ENCODE measurements at regions of chr6 and their contacts with region 1.

Region 1: GRCh38 chr6:112043032-112044007 is 10.6 kb upstream of the CCN6 start:
- DNase-seq: peak; percentile 91
- ATAC-seq: peak; percentile 96
- H3K4me3 ChIP-seq: peak overlapping the region; percentile 53
- H3K27ac ChIP-seq: peak overlapping the region; percentile 13
- H3K4me1 ChIP-seq: peaks cover 11% of the 10 kb centered on the region
- H3K27me3 ChIP-seq: no peaks in the 10 kb centered on the region
- CTCF ChIP-seq: peak; percentile 98
- POLR2A ChIP-seq: peak; percentile 68; the same call in 1 of the 2 replicates
- RAD21 ChIP-seq: peak; percentile 96

Region 2: GRCh38 chr6:111011360-111012142 is 1031.8 kb before region 1 on chr6:
- CTCF ChIA-PET with region 1: no interaction called
- POLR2A ChIA-PET with region 1: no interaction called
- dilution Hi-C with region 1: no loop called
- in situ Hi-C with region 1: no loop called
- intact Hi-C with region 1: loop called (anchors 5 kb)
- DNase-seq: peak; percentile 55
- ATAC-seq: peak; percentile 80
- H3K4me3 ChIP-seq: no peak overlapping the region
- H3K27ac ChIP-seq: no peak overlapping the region
- H3K4me1 ChIP-seq: no peaks in the 10 kb centered on the region; the same call in 1 of the 2 replicates
- H3K27me3 ChIP-seq: no peaks in the 10 kb centered on the region
- CTCF ChIP-seq: peak; percentile 70
- POLR2A ChIP-seq: no peak
- RAD21 ChIP-seq: peak; percentile 73

Region 3: GRCh38 chr6:111259089-111259831 is 784.1 kb before region 1 on chr6:
- CTCF ChIA-PET with region 1: no interaction called
- POLR2A ChIA-PET with region 1: no interaction called
- dilution Hi-C with region 1: no loop called
- in situ Hi-C with region 1: no loop called
- intact Hi-C with region 1: loop called (anchors 1 kb)
- DNase-seq: peak; percentile 99
- ATAC-seq: peak; percentile 98
- H3K4me3 ChIP-seq: peak overlapping the region; percentile 62
- H3K27ac ChIP-seq: peak overlapping the region; percentile 56
- H3K4me1 ChIP-seq: peaks cover 10% of the 10 kb centered on the region
- H3K27me3 ChIP-seq: no peaks in the 10 kb centered on the region
- CTCF ChIP-seq: peak; percentile 98
- POLR2A ChIP-seq: peak; percentile 85
- RAD21 ChIP-seq: peak; percentile 85

Region 4: DNA sequence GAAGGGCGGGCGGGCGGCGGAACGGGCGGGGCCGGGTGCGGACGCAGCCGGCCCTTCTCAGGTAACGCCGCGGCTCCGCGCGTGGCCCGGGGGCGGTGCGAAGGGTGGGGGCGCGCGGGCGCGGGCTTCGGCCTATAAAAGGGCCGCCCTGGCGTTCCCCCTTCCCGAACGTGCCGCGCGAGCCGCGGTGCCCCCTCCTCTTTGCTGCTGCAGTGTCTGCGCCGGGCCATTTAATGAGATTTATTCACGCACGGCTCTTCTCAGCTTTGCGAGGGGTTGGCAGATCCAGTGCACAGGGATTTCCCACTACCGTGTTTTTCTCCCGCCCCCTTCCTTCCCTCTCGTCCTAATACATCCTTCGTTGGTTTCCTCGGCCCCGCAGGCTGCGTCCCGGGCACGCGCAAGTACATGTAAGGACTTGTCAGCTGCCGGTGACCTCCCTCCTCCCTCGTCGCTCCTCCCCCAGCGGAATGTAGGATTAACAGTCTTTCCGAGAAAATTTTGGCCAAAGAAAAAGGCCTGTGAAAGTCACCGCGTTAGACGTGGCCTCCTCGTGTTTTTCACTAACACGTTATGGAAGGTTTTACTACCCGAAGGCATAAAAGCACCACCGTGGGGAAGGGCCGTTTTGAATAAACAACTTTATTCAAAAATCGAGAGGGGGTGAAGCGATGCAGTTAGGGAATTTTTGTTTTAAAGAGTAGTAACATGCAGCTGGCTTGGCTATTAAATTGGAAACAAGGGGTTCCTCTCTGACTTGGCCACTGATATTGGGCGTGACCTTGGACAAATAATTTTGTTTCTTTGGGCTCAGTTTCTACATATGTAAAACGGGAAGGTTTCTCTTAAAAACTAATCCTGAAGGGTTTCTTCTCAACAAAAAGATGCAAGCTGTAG is 559.3 kb before region 1 on chr6:
- CTCF ChIA-PET with region 1: no interaction called
- POLR2A ChIA-PET with region 1: no interaction called
- dilution Hi-C with region 1: no loop called
- in situ Hi-C with region 1: no loop called
- intact Hi-C with region 1: loop called (anchors 5 kb)
- DNase-seq: peak; percentile 97
- ATAC-seq: peak; percentile 74
- H3K4me3 ChIP-seq: peak overlapping the region; percentile 88
- H3K27ac ChIP-seq: peak overlapping the region; percentile 96
- H3K4me1 ChIP-seq: peaks cover 5% of the 10 kb centered on the region
- H3K27me3 ChIP-seq: no peaks in the 10 kb centered on the region
- CTCF ChIP-seq: 0 out of 2 replicates have a peak, but pooled peaks have one; percentile 3
- POLR2A ChIP-seq: peak; percentile 97
- RAD21 ChIP-seq: no peak; the same call in 1 of the 2 replicates

Region 5: GRCh38 chr6:111709615-111710398 is 333.5 kb before region 1 on chr6:
- CTCF ChIA-PET with region 1: interaction called, 4 read pairs
- POLR2A ChIA-PET with region 1: no interaction called
- dilution Hi-C with region 1: no loop called
- in situ Hi-C with region 1: no loop called
- intact Hi-C with region 1: loop called (anchors 1 kb)
- DNase-seq: peak; percentile 76
- ATAC-seq: peak; percentile 90
- H3K4me3 ChIP-seq: no peak overlapping the region
- H3K27ac ChIP-seq: 0 out of 2 replicates have a peak overlapping the region, but pooled peaks have one; percentile 48
- H3K4me1 ChIP-seq: peaks cover 6% of the 10 kb centered on the region
- H3K27me3 ChIP-seq: no peaks in the 10 kb centered on the region
- CTCF ChIP-seq: peak; percentile 82
- POLR2A ChIP-seq: no peak
- RAD21 ChIP-seq: peak; percentile 87

Region 6: DNA sequence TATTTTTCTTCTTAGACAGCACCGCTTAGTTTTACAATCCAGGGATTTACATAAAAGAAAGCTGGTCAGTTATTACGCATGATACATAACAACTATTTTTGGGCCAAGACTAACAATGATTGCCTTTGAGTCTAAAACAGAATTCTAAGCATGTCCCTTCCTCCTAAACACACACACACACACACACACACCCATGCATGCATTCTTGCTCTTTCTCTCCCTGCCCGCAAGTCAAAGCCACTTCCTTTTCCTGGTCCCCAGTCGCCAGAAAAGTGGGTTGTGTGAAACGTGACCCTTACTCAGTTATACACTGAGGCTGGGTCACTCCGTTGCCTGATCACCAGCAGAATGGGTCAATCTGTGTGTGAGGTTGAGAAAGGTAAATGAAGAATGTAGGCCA is 201.5 kb before region 1 on chr6:
- CTCF ChIA-PET with region 1: no interaction called
- POLR2A ChIA-PET with region 1: no interaction called
- dilution Hi-C with region 1: no loop called
- in situ Hi-C with region 1: no loop called
- intact Hi-C with region 1: no loop called
- DNase-seq: peak; percentile 76
- ATAC-seq: peak; percentile 22; the same call in 1 of the 2 replicates
- H3K4me3 ChIP-seq: no peak overlapping the region
- H3K27ac ChIP-seq: peak overlapping the region; percentile 63
- H3K4me1 ChIP-seq: peaks cover 17% of the 10 kb centered on the region
- H3K27me3 ChIP-seq: no peaks in the 10 kb centered on the region
- CTCF ChIP-seq: no peak
- POLR2A ChIP-seq: no peak
- RAD21 ChIP-seq: no peak

Region 7: DNA sequence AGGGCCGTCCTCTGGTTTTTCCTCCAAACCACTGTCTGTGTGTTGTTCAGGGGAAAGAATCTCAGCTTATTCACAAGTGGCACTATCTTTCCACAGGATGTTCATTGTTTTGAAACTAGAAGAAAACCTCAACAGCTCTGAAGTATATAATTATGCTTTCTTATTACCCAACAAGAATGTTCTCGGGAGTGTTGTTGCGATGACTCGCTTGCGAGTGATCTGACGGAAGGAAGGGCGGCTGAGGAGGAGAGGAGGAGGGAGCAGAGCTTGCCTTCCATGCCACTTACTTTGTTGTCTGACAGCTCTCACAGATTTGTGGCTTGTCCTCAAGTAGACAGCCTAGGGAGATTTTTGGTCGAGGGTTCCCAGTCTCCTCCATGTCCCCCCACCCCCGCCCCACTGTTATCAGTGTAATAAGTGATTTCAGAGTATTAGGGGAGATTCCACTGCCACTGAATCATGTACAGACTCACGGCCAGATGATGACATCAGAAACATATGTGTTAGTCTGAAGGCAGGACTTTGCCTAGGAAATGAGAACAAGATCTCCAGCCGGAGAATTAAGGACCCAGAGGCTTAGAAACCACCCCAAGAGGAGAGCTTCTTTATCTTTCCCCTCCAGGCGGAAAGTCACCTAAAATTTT is 70.1 kb before region 1 on chr6:
- CTCF ChIA-PET with region 1: no interaction called
- POLR2A ChIA-PET with region 1: no interaction called
- dilution Hi-C with region 1: no loop called
- in situ Hi-C with region 1: no loop called
- intact Hi-C with region 1: loop called (anchors 2 kb)
- DNase-seq: peak; percentile 98
- ATAC-seq: peak; percentile 93
- H3K4me3 ChIP-seq: peak overlapping the region; percentile 13
- H3K27ac ChIP-seq: peak overlapping the region; percentile 87
- H3K4me1 ChIP-seq: peaks cover 9% of the 10 kb centered on the region
- H3K27me3 ChIP-seq: no peaks in the 10 kb centered on the region
- CTCF ChIP-seq: no peak
- POLR2A ChIP-seq: peak; percentile 69
- RAD21 ChIP-seq: peak; percentile 6; the same call in 1 of the 2 replicates